Posterior cingulate gyrus (tissue), 11 donors: ENCODE measurements at regions of chr1 and their contacts with region 1.

Region 1: DNA sequence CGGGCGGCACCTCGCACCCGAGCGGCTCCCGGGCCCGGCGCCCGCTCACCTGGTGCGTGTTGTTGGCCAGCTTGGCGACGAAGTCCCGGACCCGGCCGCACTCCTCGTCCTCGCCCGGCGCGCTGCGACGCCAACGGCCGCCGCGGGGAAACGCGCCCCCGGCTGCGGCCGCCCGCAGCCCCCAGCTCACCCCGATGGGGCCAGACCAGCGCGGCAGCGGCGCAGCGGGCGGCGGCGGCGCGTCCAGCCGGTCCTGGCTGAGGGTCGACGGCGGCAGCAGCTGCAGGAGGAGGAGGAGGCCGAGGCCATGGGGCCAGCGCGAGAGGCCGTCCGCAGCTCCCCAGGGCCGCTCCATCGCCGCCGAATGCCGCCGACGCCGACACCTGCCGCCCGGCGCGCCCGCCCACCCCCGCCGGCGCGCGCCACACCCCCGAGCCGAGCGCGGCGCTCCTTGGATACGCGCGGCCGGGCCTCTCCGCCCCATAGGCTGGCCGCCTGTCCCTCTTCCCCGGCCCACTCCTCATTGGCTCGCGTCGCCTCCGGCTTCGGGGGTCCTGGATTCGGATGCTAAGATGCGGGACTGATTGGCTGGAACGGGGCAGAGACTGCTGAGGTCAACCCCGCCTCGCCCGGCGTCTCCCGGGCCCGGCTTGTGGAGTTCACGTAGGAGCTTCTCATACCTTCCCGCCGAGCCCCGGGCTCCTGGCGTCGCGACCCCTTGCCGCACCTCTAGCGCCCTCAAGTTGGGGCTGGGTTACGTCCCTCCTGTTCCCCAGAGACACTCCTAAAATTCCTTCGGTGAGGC is at the start of gene SORT1:
- DNase-seq: peak; percentile 93 to 99 (median 96)

Region 2: DNA sequence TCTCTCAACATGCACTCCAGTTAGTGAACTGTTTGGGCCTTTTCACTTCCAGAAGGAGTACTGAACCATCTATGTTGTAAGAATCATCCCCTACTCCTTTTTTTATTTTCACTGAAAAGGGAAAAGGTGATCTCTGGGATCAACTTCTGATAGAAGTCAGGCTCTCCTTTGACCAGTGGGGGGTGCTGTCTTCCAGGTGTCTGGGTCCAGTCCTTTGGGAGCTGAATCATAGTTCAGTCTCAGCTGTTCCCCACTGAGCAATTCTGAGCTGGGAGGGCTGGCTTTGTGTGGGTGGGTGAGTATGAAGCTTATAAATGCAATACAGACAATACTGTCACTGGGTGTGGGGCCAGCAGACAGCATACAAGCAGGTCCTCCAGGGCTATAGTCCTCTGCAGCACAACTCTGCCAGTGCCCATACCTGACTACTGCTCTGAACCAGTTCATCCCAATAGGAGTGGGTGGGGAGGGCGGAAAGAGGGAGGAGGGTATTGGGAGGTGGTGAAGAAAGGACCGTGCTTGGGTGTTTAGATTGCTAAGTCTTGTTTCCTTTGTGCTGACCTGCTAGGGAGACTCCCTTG is 196.5 kb before region 1 on chr1:
- intact Hi-C with region 1: loop called (anchors 2 kb)
- DNase-seq: peak; percentile 26 to 95 (median 72)

Region 3: GRCh38 chr1:109263597-109264398 is 133.9 kb before region 1 on chr1:
- intact Hi-C with region 1: loop called (anchors 5 kb)
- DNase-seq: peak; percentile 24 to 96 (median 75)

Region 4: DNA sequence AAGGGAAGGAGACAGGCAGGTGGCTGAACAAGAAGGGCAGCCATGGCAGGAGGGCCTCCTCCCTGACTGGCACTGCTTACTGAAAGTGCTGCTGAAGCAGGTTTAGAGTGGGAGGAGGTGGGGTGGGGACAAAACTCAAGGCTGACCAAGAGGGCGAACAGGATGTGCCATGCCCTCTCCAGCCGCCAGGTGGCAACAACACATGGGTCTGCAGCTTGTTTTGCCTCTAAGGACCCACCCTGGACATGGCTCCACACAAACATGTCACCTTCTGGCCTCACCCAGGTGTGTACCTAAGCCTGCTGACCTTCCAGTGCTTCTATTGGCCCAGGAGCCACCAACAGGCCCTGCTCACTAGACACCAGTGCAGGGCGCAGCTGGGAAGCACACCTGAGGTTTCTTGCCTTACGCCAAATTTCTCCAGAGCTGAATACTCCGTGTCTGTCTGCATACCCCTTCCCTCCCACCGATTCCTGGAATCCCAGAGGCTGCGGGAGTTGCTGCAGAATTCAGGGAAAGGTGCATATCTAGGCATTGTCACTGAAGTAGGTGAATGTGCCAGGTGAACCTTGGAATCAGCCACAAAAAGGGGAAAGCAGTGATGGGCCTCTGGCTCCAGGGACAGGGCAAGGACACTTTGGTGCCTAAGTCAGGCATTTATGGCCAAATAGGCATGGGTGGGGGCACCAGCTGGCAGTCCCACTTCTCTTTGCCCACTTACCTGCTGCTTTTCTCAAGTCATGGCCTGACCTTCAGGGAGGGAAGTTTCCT is 120.1 kb before region 1 on chr1:
- intact Hi-C with region 1: loop called (anchors 1 kb)
- DNase-seq: peak; percentile 71 to 97 (median 86)

Region 5: GRCh38 chr1:109282952-109283747 is 114.6 kb before region 1 on chr1 and contains the start of gene PSRC1:
- intact Hi-C with region 1: loop called (anchors 1 kb)
- DNase-seq: peak; percentile 97 to 100 (median 99)

Region 6: DNA sequence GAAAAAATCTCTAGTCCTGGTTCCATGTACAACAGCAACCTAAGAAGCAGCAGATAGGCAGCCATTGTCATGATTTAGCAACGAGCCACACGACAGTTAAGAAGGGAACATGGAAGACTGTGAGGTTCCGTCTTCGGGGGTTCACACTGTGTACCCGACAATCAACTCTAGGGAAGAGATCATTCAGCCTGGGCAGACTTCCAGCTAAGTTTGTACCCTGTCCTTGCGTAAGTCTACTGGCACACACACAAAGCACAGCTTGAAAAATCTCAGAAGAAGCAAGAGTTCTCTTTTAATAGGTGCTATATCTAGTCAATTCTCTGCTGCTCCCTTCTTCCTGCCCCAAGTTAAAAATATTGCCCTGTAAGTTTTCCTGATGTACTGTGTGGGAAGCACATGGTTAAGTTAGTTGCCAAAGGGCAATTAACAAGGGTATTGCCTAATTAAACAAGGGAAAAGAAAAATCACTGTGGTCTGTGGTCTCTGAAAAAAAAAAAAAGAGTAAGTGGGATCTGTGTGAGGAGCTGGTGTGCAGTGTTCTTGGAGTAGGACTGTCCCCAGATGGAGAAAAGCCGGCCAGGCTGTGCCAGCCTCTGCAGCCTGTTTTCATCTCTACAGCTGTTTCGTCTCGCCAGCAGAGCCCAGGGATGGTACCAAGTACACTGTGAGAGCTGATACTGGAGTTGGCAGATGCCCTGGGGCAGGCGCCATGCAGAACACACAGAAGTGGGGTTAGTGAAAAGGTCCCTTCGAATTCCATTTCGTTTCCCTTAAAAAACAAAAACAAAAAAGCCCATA is 84.6 kb before region 1 on chr1:
- intact Hi-C with region 1: loop called (anchors 10 kb)
- DNase-seq: peak; percentile 69 to 98 (median 86)

Region 7: DNA sequence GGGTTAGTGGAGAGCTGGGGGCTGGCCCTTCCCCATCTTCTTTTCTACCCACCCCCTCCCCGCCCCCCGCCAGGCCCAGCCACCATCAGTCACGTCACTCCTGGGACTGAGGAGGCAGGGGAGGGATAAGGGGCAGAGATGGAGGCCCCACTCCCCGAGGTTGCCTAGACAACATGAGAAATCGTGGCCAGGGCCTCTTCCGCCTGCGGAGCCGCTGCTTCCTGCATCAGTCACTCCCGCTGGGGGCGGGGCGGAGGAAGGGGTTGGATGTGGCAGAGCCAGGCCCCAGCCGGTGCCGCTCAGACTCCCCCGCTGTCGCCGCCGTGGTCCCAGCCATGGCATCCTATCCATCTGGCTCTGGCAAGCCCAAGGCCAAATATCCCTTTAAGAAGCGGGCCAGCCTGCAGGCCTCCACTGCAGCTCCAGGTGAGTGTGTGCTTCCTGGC is 223.1 kb after region 1 on chr1:
- intact Hi-C with region 1: no loop called
- DNase-seq: peak; percentile 84 to 99 (median 95)